HCT116 (cell line): ENCODE measurements at regions of chr17 and their contacts with region 1.

Region 1: GRCh38 chr17:45385331-45385997 is 47.2 kb downstream of the ARHGAP27 start:
- DNase-seq: peak; percentile 87
- ATAC-seq: peak; percentile 94
- H3K4me3 ChIP-seq: no peak overlapping the region
- H3K27ac ChIP-seq: no peak overlapping the region
- H3K4me1 ChIP-seq: peaks cover 0 to 35% of the 10 kb centered on the region in 2 experiments; a peak in 2 of 4 replicates
- H3K27me3 ChIP-seq: no peaks in the 10 kb centered on the region
- CTCF ChIP-seq: peak; percentile 99 to 100 (median 100)
- POLR2A ChIP-seq: no peak
- RAD21 ChIP-seq: peak; percentile 100

Region 2: DNA sequence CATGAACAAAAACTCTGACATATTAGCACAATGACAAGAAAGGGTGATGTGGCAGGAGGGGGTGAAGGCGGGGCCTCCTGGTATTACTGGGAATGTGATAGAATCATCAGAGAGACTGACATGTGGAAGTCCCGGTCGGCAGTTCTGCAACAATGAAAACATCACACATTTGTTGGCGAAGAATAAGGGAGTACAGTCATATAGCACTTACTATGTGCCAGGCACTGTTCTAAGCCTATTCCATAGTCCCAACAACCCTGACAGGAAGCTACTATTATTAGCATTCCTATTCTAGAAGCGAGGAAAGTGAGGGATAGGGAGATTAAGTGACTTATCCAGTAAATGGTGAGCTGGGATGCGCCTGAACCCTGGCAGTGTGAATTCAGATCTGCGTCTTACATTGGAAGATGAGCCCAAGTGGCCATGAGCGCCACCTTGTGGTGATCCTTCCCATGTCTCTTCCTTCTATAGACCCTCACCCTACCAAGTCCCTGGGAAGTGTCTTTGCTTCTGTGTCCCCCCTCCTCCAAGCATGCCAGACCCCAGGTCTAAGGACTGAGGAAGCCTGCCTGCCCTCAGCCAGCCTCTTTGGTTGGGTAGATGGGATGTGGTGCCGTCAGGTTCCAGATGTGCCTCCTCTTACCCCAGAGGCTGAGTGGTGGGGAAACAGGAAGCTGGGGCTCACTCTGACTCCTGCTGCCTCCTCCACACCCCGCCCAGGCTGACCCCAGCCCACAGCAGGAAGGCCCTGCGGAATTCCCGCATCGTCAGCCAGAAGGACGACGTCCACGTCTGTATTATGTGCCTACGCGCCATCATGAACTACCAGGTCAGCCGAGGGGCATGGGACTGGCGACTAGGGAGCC is 149.8 kb before region 1 on chr17:
- CTCF ChIA-PET with region 1: interaction called, 5 read pairs
- POLR2A ChIA-PET with region 1: no interaction called
- RAD21 ChIA-PET with region 1: no interaction called
- intact Hi-C with region 1: loop called (anchors 1 kb)
- DNase-seq: peak; percentile 54
- ATAC-seq: peak; percentile 69
- H3K4me3 ChIP-seq: no peak overlapping the region
- H3K27ac ChIP-seq: no peak overlapping the region
- H3K4me1 ChIP-seq: peaks cover 12 to 19% of the 10 kb centered on the region in 2 experiments
- H3K27me3 ChIP-seq: no peaks in the 10 kb centered on the region
- CTCF ChIP-seq: peak; percentile 86 to 88 (median 86)
- POLR2A ChIP-seq: no peak
- RAD21 ChIP-seq: peak; percentile 71

Region 3: DNA sequence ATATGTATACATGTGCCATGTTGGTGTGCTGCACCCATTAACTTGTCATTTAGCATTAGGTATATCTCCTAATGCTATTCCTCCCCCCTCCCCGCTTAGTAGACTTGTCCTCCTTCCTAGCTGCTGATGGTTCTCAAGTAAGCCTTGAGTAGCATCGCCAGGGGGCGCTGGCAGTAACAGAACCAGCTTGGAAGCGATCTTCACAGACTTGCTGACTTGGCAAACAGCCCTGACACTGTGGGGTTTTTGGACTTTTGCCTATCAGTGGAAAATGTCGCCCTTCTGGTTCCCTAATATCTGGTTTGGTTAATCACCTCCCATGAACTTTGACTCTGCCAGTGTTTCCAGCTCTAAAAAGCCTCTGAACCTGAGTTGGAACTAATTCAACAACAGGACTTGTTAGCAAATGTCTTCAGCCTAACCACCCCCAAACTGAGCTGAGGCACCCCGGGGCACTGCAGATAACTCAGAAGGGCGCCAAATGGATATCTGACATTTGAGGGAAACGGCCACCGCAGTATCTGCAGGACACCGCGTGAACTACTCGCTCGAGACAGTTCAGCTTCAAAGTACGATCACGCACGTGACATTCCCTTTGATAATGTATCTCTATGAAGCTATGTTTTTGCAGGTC is 108.1 kb before region 1 on chr17:
- CTCF ChIA-PET with region 1: interaction called, 115 read pairs
- POLR2A ChIA-PET with region 1: no interaction called
- RAD21 ChIA-PET with region 1: interaction called, 16 to 17 read pairs
- intact Hi-C with region 1: loop called (anchors 1 kb)
- DNase-seq: peak; percentile 90
- ATAC-seq: peak; percentile 87
- H3K4me3 ChIP-seq: no peak overlapping the region
- H3K27ac ChIP-seq: peak overlapping the region; percentile 36
- H3K4me1 ChIP-seq: peaks cover 17 to 38% of the 10 kb centered on the region in 2 experiments
- H3K27me3 ChIP-seq: no peaks in the 10 kb centered on the region
- CTCF ChIP-seq: peak; percentile 74 to 90 (median 89)
- POLR2A ChIP-seq: no peak
- RAD21 ChIP-seq: peak; percentile 91

Region 4: GRCh38 chr17:45293413-45294211 is 91.9 kb before region 1 on chr17:
- CTCF ChIA-PET with region 1: interaction called, 5 read pairs
- POLR2A ChIA-PET with region 1: no interaction called
- RAD21 ChIA-PET with region 1: interaction called in 1 of 2 experiments, 4 read pairs
- intact Hi-C with region 1: loop called (anchors 1 kb)
- DNase-seq: peak; percentile 65
- ATAC-seq: peak; percentile 85
- H3K4me3 ChIP-seq: peak overlapping the region in 1 of 2 experiments; percentile 9; a peak in 1 of 4 replicates
- H3K27ac ChIP-seq: peak overlapping the region; percentile 36
- H3K4me1 ChIP-seq: peaks cover 37 to 62% of the 10 kb centered on the region in 2 experiments
- H3K27me3 ChIP-seq: no peaks in the 10 kb centered on the region
- CTCF ChIP-seq: 0 out of 6 replicates have a peak, but pooled peaks of 1 of the 3 experiments have one; percentile 4
- POLR2A ChIP-seq: no peak
- RAD21 ChIP-seq: peak; percentile 40; the same call in 1 of the 2 replicates

Region 5: DNA sequence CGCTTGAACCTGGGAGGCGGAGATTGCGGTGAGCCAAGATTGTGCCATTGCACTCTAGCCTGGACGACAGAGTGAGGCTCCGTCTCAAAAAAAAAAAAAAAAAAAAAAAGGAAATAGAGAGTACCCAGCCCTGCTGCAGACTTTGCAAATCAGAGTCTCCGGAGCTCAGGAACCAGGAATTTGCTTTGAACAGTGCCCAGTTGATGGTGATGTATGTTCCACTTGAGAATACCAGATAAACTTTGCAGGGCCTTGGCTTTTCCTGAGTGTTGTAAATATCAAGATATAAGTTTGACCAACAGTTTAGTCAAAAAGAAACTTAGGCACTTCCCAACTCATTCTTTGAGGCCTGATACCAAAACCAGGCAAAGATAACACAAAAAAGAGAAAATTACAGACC is 38.0 kb before region 1 on chr17:
- CTCF ChIA-PET with region 1: no interaction called
- POLR2A ChIA-PET with region 1: no interaction called
- RAD21 ChIA-PET with region 1: no interaction called
- intact Hi-C with region 1: no loop called
- DNase-seq: no peak
- ATAC-seq: no peak
- H3K4me3 ChIP-seq: no peak overlapping the region
- H3K27ac ChIP-seq: no peak overlapping the region
- H3K4me1 ChIP-seq: peaks cover 2 to 3% of the 10 kb centered on the region in 2 experiments; a peak in 3 of 4 replicates
- H3K27me3 ChIP-seq: no peaks in the 10 kb centered on the region
- CTCF ChIP-seq: no peak
- POLR2A ChIP-seq: no peak
- RAD21 ChIP-seq: no peak

Region 6: GRCh38 chr17:45371414-45372327 is 13.8 kb before region 1 on chr17:
- CTCF ChIA-PET with region 1: interaction called, 33 read pairs
- POLR2A ChIA-PET with region 1: interaction called, 16 read pairs
- RAD21 ChIA-PET with region 1: interaction called in 1 of 2 experiments, 3 read pairs
- intact Hi-C with region 1: no loop called
- DNase-seq: peak; percentile 92
- ATAC-seq: peak; percentile 92
- H3K4me3 ChIP-seq: peak overlapping the region; percentile 32 to 44
- H3K27ac ChIP-seq: peak overlapping the region; percentile 90
- H3K4me1 ChIP-seq: peaks cover 53 to 86% of the 10 kb centered on the region in 2 experiments
- H3K27me3 ChIP-seq: no peaks in the 10 kb centered on the region
- CTCF ChIP-seq: no peak
- POLR2A ChIP-seq: no peak
- RAD21 ChIP-seq: no peak

Region 7: DNA sequence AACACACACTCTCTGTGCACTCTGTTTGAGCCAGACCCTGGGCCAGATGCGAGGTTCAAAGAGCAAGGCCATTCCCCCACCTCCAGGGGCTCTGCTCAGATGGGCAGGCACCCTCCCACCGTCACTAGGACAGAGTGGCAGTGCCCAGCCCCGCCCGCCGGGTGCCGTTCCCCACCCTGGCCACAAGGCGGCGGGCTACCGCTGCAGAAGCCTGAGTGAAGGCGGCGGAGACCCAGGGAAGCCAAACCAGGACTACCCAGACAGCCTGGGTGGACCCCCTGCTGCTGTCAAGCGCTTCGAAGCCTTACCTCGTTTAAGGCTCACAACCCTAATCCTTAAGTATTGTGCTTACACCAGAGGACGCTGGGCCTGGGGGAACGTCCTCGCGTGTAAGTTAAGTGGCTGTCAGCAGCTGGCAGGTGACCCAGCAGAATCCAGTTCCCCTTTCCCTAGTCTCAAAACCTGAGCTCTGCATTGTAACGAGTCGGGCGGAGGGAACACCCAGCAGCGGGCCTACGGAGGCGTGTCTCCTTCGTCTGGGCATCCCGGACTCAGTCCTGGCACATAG is 42.7 kb after region 1 on chr17:
- CTCF ChIA-PET with region 1: interaction called, 15 read pairs
- POLR2A ChIA-PET with region 1: interaction called, 4 read pairs
- RAD21 ChIA-PET with region 1: no interaction called
- intact Hi-C with region 1: no loop called
- DNase-seq: peak; percentile 57
- ATAC-seq: peak; percentile 35
- H3K4me3 ChIP-seq: peak overlapping the region; percentile 3 to 8; a peak in 1 of 4 replicates
- H3K27ac ChIP-seq: no peak overlapping the region
- H3K4me1 ChIP-seq: peaks cover 16 to 56% of the 10 kb centered on the region in 2 experiments
- H3K27me3 ChIP-seq: no peaks in the 10 kb centered on the region
- CTCF ChIP-seq: peak; percentile 93 to 99 (median 99)
- POLR2A ChIP-seq: no peak
- RAD21 ChIP-seq: peak; percentile 98

Region 8: GRCh38 chr17:45573924-45574770 is 188.7 kb after region 1 on chr17:
- CTCF ChIA-PET with region 1: no interaction called
- POLR2A ChIA-PET with region 1: no interaction called
- RAD21 ChIA-PET with region 1: no interaction called
- intact Hi-C with region 1: no loop called
- DNase-seq: no peak
- ATAC-seq: no peak
- H3K4me3 ChIP-seq: no peak overlapping the region
- H3K27ac ChIP-seq: no peak overlapping the region
- H3K4me1 ChIP-seq: no peaks in the 10 kb centered on the region
- H3K27me3 ChIP-seq: no peaks in the 10 kb centered on the region
- CTCF ChIP-seq: no peak
- POLR2A ChIP-seq: no peak
- RAD21 ChIP-seq: no peak

Region 9: GRCh38 chr17:45639297-45639849 is 253.9 kb after region 1 on chr17:
- CTCF ChIA-PET with region 1: no interaction called
- POLR2A ChIA-PET with region 1: no interaction called
- RAD21 ChIA-PET with region 1: no interaction called
- intact Hi-C with region 1: no loop called
- DNase-seq: no peak
- ATAC-seq: no peak
- H3K4me3 ChIP-seq: no peak overlapping the region
- H3K27ac ChIP-seq: no peak overlapping the region
- H3K4me1 ChIP-seq: no peaks in the 10 kb centered on the region
- H3K27me3 ChIP-seq: no peaks in the 10 kb centered on the region
- CTCF ChIP-seq: no peak; a peak in 1 of 6 replicates
- POLR2A ChIP-seq: no peak
- RAD21 ChIP-seq: no peak

Region 10: GRCh38 chr17:45834471-45835396 is 449.3 kb after region 1 on chr17:
- CTCF ChIA-PET with region 1: no interaction called
- POLR2A ChIA-PET with region 1: no interaction called
- RAD21 ChIA-PET with region 1: no interaction called
- intact Hi-C with region 1: loop called (anchors 5 kb)
- DNase-seq: no peak
- ATAC-seq: peak; percentile 25; the same call in 1 of the 2 replicates
- H3K4me3 ChIP-seq: no peak overlapping the region
- H3K27ac ChIP-seq: no peak overlapping the region
- H3K4me1 ChIP-seq: peaks cover 0 to 7% of the 10 kb centered on the region in 2 experiments; a peak in 2 of 4 replicates
- H3K27me3 ChIP-seq: no peaks in the 10 kb centered on the region; the same call in 1 of the 2 replicates
- CTCF ChIP-seq: no peak
- POLR2A ChIP-seq: no peak
- RAD21 ChIP-seq: no peak